CD8-positive, alpha-beta T cell (primary cell): ENCODE measurements at regions of chr6 and their contacts with region 1.

Region 1: GRCh38 chr6:42166444-42167141 is 6.6 kb upstream of the GUCA1A start:
- DNase-seq: peak; percentile 60 to 87 (median 78)
- ATAC-seq: peak; percentile 98
- H3K4me3 ChIP-seq: no peak overlapping the region
- H3K4me3 Mint-ChIP-seq: no peak overlapping the region
- H3K27ac ChIP-seq: no peak overlapping the region
- H3K27ac Mint-ChIP-seq: no peak overlapping the region
- H3K4me1 ChIP-seq: no peaks in the 10 kb centered on the region
- H3K4me1 Mint-ChIP-seq: peaks cover 6% of the 10 kb centered on the region
- H3K27me3 ChIP-seq: no peaks in the 10 kb centered on the region
- H3K27me3 Mint-ChIP-seq: peaks cover 2% of the 10 kb centered on the region
- CTCF ChIP-seq: peak; percentile 89

Region 2: DNA sequence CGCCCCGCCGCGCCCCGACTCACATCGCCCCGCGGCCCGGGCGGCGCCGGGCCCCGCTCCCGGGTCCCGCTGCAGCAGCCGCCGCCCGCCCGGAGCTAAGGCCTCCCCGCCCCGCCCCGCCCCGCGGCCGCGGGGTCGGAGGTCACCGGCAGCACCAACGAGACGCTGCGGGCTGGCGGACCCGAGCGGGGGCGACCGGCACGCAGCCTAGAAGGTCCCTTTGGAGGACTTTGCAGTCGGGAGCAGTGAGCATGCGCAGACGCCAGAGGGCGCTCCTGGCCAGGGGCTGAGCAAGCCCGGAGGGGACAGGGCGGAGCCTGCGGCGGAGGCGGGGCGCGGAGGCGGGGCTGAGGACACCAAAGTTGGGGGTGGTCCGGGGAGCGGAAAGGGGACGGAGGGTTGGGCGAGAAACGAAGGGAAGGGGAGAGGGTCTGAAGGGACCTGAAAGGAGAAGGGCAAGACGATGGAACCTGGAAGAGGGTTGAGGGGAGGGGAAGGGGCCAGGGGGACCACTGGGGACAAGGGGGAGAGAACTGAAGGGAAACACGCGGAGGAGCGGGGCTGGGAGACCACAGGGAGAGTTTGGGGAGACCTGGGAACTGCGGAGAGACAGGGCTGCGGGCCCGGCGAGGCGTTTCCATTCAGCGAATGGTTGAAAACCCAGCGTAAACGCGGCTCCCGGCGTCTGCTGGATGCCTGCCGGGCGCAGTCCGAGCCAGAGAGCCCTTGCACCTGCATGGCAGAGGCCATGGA is 386.6 kb before region 1 on chr6 and contains the start of gene FRS3:
- CTCF ChIA-PET with region 1: interaction called, 3 read pairs
- POLR2A ChIA-PET with region 1: interaction called, 3 read pairs
- intact Hi-C with region 1: loop called (anchors 1 kb)
- DNase-seq: peak; percentile 96 to 100 (median 99)
- ATAC-seq: peak; percentile 97
- H3K4me3 ChIP-seq: peak within 1 kb of the TSS; percentile 73 to 93
- H3K4me3 Mint-ChIP-seq: peak within 1 kb of the TSS; percentile 93
- H3K27ac ChIP-seq: peak within 1 kb of the TSS in 1 of 2 experiments; percentile 23
- H3K27ac Mint-ChIP-seq: no peak within 1 kb of the TSS
- H3K4me1 ChIP-seq: peaks cover 18% of the 10 kb centered on the region
- H3K4me1 Mint-ChIP-seq: peaks cover 21% of the 10 kb centered on the region
- H3K27me3 ChIP-seq: no peaks in the 10 kb centered on the region
- H3K27me3 Mint-ChIP-seq: peaks cover 4% of the 10 kb centered on the region
- CTCF ChIP-seq: peak; percentile 74
- total RNA-seq, gene FRS3: 3.7 to 6.2 TPM

Region 3: GRCh38 chr6:41901882-41902519 is 264.6 kb before region 1 on chr6:
- CTCF ChIA-PET with region 1: interaction called, 4 read pairs
- POLR2A ChIA-PET with region 1: no interaction called
- intact Hi-C with region 1: loop called in 1 of 2 experiments (anchors 1 kb)
- DNase-seq: peak; percentile 25 to 81 (median 59)
- ATAC-seq: peak; percentile 71
- H3K4me3 ChIP-seq: no peak overlapping the region
- H3K4me3 Mint-ChIP-seq: no peak overlapping the region
- H3K27ac ChIP-seq: no peak overlapping the region
- H3K27ac Mint-ChIP-seq: no peak overlapping the region
- H3K4me1 ChIP-seq: peaks cover 11% of the 10 kb centered on the region
- H3K4me1 Mint-ChIP-seq: peaks cover 19% of the 10 kb centered on the region
- H3K27me3 ChIP-seq: no peaks in the 10 kb centered on the region
- H3K27me3 Mint-ChIP-seq: no peaks in the 10 kb centered on the region
- CTCF ChIP-seq: peak; percentile 42

Region 4: DNA sequence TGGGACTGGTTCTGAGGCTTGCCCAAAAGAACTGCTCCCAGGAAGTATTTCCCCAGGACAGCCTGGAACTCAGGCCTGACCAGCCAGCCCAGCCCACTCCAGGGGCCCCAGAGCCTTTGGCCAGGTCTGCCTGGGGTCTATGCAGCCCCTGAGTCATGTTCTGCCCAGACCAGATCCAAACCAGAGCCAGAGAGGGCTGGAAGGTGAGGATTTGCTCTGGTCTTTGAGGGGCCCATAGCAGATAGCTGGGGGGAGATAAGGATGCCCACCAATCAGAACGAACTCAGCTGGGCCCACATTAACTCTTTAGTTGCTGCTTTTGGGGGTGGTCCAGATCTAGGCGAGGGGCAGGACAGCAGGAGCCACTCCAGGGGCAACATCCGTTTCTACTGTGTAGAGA is 40.9 kb before region 1 on chr6:
- CTCF ChIA-PET with region 1: no interaction called
- POLR2A ChIA-PET with region 1: no interaction called
- intact Hi-C with region 1: loop called in 1 of 2 experiments (anchors 1 kb)
- DNase-seq: no peak
- ATAC-seq: no peak
- H3K4me3 ChIP-seq: no peak overlapping the region
- H3K4me3 Mint-ChIP-seq: no peak overlapping the region
- H3K27ac ChIP-seq: no peak overlapping the region
- H3K27ac Mint-ChIP-seq: no peak overlapping the region
- H3K4me1 ChIP-seq: no peaks in the 10 kb centered on the region
- H3K4me1 Mint-ChIP-seq: no peaks in the 10 kb centered on the region
- H3K27me3 ChIP-seq: no peaks in the 10 kb centered on the region
- H3K27me3 Mint-ChIP-seq: no peaks in the 10 kb centered on the region
- CTCF ChIP-seq: no peak

Region 5: DNA sequence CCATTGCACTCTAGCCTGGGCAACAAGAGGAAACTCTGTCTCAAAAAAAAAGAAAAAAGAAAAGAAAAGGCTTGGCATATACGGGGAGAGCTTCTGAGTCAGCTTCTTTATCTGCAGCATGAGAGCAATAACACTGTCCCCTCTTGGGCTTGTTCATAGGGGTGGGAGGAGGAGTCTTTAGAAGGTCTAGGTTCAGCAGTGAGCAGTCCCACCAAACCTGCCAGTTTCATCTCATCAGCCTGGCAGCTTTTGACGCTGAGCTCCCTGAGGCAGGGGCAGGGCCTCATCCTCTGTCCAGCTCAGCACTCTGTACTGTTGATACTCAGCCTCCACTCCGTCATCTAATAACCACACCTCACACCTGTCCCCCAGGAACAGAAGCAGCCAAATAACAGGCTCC is 18.5 kb before region 1 on chr6:
- CTCF ChIA-PET with region 1: no interaction called
- POLR2A ChIA-PET with region 1: no interaction called
- intact Hi-C with region 1: no loop called
- DNase-seq: no peak
- ATAC-seq: no peak
- H3K4me3 ChIP-seq: no peak overlapping the region
- H3K4me3 Mint-ChIP-seq: no peak overlapping the region
- H3K27ac ChIP-seq: no peak overlapping the region
- H3K27ac Mint-ChIP-seq: no peak overlapping the region
- H3K4me1 ChIP-seq: no peaks in the 10 kb centered on the region
- H3K4me1 Mint-ChIP-seq: no peaks in the 10 kb centered on the region
- H3K27me3 ChIP-seq: peaks cover 0 to 5% of the 10 kb centered on the region in 2 experiments
- H3K27me3 Mint-ChIP-seq: peaks cover 11% of the 10 kb centered on the region
- CTCF ChIP-seq: no peak